Gastrocnemius medialis (tissue), 4 donors: ENCODE measurements at regions of chr1 and their contacts with region 1.

Region 1: GRCh38 chr1:109112652-109113285 is 1.1 kb upstream of the ELAPOR1 start:
- DNase-seq: peak; percentile 72 to 85
- ATAC-seq: peak; percentile 90 to 95
- H3K4me3 ChIP-seq: peak overlapping the region; percentile 36 to 53 (median 42)
- H3K27ac ChIP-seq: no peak overlapping the region
- H3K4me1 ChIP-seq: peaks cover 12 to 20% of the 10 kb centered on the region in 2 donors
- H3K27me3 ChIP-seq: peaks cover 22 to 35% (median 34%) of the 10 kb centered on the region in 3 donors
- CTCF ChIP-seq: peak; percentile 80 to 97 (median 94)
- POLR2A ChIP-seq: no peak

Region 2: DNA sequence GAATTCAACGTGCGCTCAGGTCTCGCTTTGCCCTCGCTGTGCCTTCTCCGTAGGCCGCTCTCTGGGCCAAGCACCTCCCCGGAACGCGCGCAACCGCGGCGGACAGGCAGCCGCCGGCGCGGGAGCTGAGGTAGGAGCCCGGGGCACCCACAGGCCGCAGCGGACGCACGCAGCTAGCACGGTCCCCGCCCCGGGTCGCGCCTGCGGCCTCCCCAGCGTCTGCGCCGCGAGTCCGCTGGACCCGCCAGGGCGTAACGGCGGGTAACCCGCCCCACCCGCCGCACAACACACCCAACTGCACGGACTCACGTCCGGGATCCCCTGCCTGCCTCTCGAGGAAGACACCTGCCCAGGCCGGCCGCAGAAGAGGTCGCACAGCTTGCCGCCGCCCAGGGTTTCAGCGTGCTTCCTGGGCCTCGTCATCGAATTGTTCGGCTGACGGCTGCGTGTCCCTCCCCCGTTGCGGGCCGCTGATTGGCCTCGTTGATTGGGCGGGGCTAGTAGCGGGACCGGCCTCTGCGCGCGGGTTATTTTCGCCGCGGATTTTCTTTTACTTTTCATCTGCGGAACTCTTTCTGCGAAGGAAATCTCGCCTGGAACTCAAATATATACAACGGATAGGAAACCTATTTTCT is 149.6 kb before region 1 on chr1 and contains the start of gene CLCC1:
- in situ Hi-C with region 1: loop called in 1 of 4 experiments (anchors 10 kb)
- intact Hi-C with region 1: loop called (anchors 5 kb)
- DNase-seq: peak; percentile 92
- ATAC-seq: peak; percentile 98
- H3K4me3 ChIP-seq: peak within 1 kb of the TSS; percentile 65 to 85 (median 69)
- H3K27ac ChIP-seq: peak within 1 kb of the TSS; percentile 88 to 96 (median 91)
- H3K4me1 ChIP-seq: peaks cover 10 to 13% of the 10 kb centered on the region in 2 donors
- H3K27me3 ChIP-seq: no peaks in the 10 kb centered on the region
- CTCF ChIP-seq: no peak
- POLR2A ChIP-seq: peak; percentile 86 to 92
- total RNA-seq, gene CLCC1: 24.1 to 32.4 (median 28.5) TPM

Region 3: DNA sequence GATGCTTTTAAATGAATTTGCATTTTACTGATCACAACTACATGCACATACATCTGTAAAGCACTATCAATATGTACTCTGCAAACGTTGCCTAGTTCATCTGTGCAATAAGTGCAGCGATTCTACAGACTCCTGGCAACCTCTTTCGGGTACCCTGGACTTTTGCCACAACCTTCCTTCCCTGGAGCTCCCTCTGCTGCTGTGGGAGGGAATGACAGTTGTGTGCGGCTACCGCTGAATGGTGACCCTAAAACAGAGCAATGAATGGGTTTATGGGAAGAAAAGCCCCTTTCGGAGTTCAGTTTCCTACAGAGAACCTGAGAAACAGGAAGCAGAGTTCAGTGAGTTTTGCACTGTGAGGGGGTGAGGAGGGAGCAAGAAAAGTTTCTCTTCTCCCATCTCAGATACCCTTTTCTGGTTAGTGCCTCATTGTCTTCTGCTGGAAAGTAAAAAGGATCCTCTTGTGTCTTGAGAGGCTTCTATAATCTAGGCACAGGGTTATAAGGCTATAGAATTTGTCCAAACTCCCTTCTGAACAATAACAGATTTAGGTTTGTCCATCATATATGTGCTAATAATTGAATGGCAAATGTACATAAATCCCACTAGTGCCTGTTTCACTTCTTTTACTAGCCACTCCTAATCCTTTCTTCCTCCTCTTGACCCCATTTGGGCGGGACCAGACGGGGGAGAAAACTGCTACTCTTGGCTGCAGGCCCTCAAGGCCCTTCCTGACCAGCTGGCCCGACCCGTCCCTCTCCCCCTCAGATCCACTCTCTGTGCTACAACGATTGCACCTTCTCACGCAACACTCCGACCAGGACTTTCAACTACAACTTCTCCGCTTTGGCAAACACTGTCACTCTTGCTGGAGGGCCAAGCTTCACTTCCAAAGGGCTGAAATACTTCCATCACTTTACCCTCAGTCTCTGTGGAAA is 81.2 kb after region 1 on chr1:
- in situ Hi-C with region 1: loop called in 1 of 4 experiments (anchors 10 kb)
- intact Hi-C with region 1: loop called (anchors 5 kb)
- DNase-seq: no peak
- ATAC-seq: peak; percentile 51 to 62
- H3K4me3 ChIP-seq: no peak overlapping the region
- H3K27ac ChIP-seq: no peak overlapping the region
- H3K4me1 ChIP-seq: no peaks in the 10 kb centered on the region
- H3K27me3 ChIP-seq: no peaks in the 10 kb centered on the region
- CTCF ChIP-seq: peak; percentile 49 to 67 (median 61)
- POLR2A ChIP-seq: no peak